ENCODE measurements at regions of chr1 and their contacts with region 1.

Region 1: DNA sequence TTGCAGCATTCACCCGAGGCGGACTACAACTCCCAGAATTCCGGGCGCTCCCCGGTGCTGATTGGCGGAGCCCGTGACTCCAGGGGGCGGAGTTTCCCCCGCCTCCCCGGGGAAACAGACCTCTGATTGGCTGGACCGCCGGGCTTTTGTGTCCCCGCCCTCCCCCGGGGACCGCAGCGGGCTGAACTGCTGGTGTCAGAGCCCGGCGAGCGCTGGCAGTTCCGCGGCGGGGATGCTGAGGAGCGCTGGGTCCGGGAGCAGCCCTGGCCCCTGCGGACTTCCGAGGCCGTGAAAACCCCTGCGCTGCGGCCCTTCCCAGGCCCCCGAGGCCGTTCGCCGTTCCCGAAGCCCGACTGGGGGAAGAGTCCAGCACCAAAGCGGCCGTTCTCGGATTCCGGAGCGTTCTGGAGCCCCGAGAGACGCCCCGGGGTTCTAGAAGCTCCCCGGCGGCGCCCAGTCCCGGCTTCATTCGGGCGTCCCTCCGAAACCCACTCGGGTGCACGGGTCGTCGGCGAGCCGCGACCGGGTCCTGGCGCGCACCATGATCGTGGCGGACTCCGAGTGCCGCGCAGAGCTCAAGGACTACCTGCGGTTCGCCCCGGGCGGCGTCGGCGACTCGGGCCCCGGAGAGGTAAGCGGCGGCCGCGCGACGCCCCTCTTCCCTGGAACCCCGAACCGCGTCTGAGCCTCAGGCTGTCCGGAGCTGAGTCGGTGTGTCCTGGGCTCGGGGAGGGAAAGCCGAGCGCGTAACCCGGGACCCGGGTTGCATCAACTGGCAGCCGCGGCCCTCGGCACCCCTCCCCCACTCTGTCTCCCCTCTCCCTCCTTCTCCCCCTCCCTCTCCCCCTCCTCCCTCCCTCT is at the start of gene SESN2:
- DNase-seq: peak; percentile 99
- H3K4me3 ChIP-seq: peak within 1 kb of the TSS; percentile 85 to 100 (median 97)
- H3K27ac ChIP-seq: peak within 1 kb of the TSS; percentile 68 to 94 (median 86)
- H3K4me1 ChIP-seq: peaks cover 17 to 78% (median 32%) of the 10 kb centered on the region in 6 donors
- H3K27me3 ChIP-seq: peaks cover 0 to 5% (median 0%) of the 10 kb centered on the region in 7 donors
- CTCF ChIP-seq: peak in 2 of 11 experiments; percentile 35 to 40
- POLR2A ChIP-seq: peak; percentile 82 to 94 (median 82)
- total RNA-seq, gene SESN2: 7.4 to 16.7 (median 8.6) TPM

Region 2: DNA sequence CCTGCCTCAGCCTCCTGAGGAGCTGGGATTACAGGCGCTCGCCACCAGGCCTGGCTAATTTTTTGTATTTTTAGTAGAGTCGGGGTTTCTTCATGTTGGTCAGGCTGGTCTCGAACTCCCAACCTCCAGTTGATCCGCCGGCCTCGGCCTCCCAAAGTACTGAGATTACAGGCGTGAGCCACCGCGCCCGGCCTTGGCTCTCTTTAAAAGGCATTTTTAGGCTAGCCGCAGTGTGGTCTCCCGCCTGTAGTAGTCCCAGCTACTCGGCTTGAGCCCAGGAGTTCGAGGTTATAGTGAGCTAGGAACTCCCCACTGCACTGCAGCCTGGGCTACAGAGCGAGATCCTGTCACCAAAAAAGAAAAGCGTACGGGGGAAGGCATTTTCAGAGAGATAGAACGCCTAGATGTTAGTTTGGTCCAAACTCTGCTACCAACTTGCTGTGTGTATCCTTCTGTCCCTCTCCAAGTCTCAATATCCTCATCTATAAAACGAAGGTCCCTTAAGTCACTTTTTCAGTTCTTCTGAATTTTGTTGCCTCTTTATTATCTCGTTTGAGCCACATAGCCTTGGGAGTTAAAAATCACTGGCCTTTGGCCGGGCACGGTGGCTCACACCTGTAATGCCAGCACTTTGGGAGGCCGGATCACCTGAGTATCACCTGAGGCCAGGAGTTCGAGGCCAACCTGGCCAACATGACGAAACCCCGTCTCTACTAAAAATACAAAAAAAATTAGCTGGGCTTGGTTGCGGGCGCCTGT is 70.0 kb after region 1 on chr1:
- intact Hi-C with region 1: loop called (anchors 10 kb)
- DNase-seq: peak; percentile 86
- H3K4me3 ChIP-seq: peak overlapping the region; percentile 47 to 75 (median 60)
- H3K27ac ChIP-seq: peak overlapping the region; percentile 91 to 96 (median 94)
- H3K4me1 ChIP-seq: peaks cover 12 to 82% (median 44%) of the 10 kb centered on the region in 6 donors
- H3K27me3 ChIP-seq: no peaks in the 10 kb centered on the region
- CTCF ChIP-seq: peak in 3 of 11 experiments; percentile 12 to 17 (median 14)
- POLR2A ChIP-seq: no peak

Region 3: DNA sequence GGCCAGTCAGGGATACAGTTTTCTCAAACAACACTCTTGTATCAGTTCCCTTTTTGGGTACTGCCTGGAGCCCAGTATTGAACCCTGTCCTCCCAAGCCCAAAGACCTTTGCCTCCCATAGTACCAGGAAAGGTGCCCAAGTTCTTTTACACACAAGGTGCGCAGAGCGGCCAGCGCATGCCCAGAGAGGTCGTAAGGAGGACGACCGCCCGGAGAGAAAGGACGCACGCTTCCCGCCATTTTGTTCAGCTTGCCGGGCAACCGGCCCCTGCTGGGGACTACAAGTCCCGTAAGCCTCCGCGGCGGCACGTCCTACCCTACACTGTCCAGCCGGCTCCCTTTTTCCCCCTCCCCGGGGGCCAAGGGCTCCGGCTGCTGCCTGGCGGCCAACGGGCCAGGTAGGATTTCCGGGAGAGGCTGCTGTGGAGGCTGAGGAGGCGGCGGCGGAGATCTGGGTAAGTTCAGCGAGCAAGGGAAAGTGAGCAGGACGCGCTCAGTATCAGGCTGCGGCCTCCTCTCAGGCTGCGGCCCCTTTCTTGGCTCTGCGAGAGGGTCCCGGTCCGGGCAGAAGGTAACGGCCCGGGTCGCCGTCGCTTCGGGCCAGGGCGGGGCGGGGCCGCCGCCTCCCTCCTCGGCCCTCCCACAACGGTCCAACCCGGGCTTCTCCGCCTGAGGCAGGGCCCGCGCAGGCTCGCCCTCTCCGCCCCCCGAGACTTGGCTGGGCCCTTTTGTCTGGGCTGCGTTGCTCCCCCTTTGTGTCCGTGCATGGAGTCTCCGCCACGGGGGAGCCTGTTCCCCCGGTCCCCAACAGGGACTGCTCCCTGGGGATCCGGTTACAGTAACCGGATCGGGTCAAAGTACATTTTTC is 110.1 kb after region 1 on chr1 and contains the start of gene PHACTR4:
- intact Hi-C with region 1: loop called (anchors 10 kb)
- DNase-seq: peak; percentile 96
- H3K4me3 ChIP-seq: peak within 1 kb of the TSS; percentile 69 to 89 (median 84)
- H3K27ac ChIP-seq: peak within 1 kb of the TSS; percentile 70 to 96 (median 92)
- H3K4me1 ChIP-seq: peaks cover 15 to 62% (median 29%) of the 10 kb centered on the region in 6 donors
- H3K27me3 ChIP-seq: no peaks in the 10 kb centered on the region
- CTCF ChIP-seq: peak in 1 of 11 experiments; percentile 6
- POLR2A ChIP-seq: peak in 1 of 3 donors; percentile 38
- total RNA-seq, gene PHACTR4: 24.1 to 55.9 (median 32.9) TPM

Region 4: GRCh38 chr1:28565040-28565439 is 305.5 kb after region 1 on chr1:
- intact Hi-C with region 1: no loop called
- DNase-seq: no peak
- H3K4me3 ChIP-seq: no peak overlapping the region
- H3K27ac ChIP-seq: no peak overlapping the region
- H3K4me1 ChIP-seq: no peaks in the 10 kb centered on the region
- H3K27me3 ChIP-seq: no peaks in the 10 kb centered on the region
- CTCF ChIP-seq: no peak
- POLR2A ChIP-seq: no peak

Measured in spleen (tissue), 13 donors.